Activated CD8-positive, alpha-beta T cell treated with anti-CD3 and anti-CD28 coated beads for 36 hours (primary cell): ENCODE measurements at regions of chr11 and their contacts with region 1.

Region 1: GRCh38 chr11:117200813-117201657 is 1.9 kb downstream of the TAGLN start:
- DNase-seq: no peak
- ATAC-seq: no peak
- H3K4me3 Mint-ChIP-seq: no peak overlapping the region
- H3K27ac Mint-ChIP-seq: no peak overlapping the region
- H3K4me1 Mint-ChIP-seq: no peaks in the 10 kb centered on the region
- H3K27me3 Mint-ChIP-seq: no peaks in the 10 kb centered on the region
- CTCF ChIP-seq: no peak

Region 2: GRCh38 chr11:117134431-117134830 is 66.6 kb before region 1 on chr11:
- CTCF ChIA-PET with region 1: no interaction called
- POLR2A ChIA-PET with region 1: no interaction called
- intact Hi-C with region 1: loop called (anchors 5 kb)
- DNase-seq: no peak
- ATAC-seq: no peak
- H3K4me3 Mint-ChIP-seq: no peak overlapping the region
- H3K27ac Mint-ChIP-seq: no peak overlapping the region
- H3K4me1 Mint-ChIP-seq: peaks cover 3% of the 10 kb centered on the region
- H3K27me3 Mint-ChIP-seq: no peaks in the 10 kb centered on the region
- CTCF ChIP-seq: no peak

Region 3: DNA sequence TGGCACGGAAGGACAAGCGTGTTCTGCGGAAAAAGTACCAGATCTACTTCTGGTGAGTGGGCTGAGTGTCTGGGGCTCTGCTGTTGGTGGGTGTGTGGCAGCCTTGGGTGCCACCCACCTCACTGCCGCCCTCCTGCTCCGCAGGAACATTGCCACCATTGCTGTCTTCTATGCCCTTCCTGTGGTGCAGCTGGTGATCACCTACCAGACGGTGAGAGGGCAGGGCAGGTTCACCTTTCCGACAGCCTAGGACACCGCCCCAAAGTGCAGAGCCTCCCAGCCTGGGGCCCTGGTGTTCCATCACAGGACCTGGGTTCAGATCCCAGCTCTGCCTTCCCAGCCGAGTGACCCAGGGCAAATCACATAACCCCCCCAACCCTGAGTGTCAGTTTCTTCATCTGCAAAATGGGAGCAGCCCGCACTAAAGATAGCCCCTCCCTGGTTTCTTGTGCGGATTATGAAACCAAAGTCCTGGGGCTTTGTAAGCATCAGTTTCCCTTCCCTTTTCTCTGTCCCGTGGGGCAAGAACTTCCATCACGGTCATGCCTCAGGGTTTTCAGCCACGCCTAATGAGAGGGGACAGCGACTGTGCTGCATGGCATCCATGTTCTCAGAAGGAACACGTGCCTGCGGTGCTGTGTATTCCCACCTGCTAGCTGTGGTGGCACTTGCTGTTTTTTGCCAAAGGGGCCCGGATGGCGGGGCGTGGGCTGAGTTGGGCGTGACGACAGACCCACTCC is 11.7 kb before region 1 on chr11:
- CTCF ChIA-PET with region 1: no interaction called
- POLR2A ChIA-PET with region 1: no interaction called
- intact Hi-C with region 1: no loop called
- DNase-seq: no peak
- ATAC-seq: no peak
- H3K4me3 Mint-ChIP-seq: no peak overlapping the region
- H3K27ac Mint-ChIP-seq: no peak overlapping the region
- H3K4me1 Mint-ChIP-seq: no peaks in the 10 kb centered on the region
- H3K27me3 Mint-ChIP-seq: no peaks in the 10 kb centered on the region
- CTCF ChIP-seq: no peak

Region 4: DNA sequence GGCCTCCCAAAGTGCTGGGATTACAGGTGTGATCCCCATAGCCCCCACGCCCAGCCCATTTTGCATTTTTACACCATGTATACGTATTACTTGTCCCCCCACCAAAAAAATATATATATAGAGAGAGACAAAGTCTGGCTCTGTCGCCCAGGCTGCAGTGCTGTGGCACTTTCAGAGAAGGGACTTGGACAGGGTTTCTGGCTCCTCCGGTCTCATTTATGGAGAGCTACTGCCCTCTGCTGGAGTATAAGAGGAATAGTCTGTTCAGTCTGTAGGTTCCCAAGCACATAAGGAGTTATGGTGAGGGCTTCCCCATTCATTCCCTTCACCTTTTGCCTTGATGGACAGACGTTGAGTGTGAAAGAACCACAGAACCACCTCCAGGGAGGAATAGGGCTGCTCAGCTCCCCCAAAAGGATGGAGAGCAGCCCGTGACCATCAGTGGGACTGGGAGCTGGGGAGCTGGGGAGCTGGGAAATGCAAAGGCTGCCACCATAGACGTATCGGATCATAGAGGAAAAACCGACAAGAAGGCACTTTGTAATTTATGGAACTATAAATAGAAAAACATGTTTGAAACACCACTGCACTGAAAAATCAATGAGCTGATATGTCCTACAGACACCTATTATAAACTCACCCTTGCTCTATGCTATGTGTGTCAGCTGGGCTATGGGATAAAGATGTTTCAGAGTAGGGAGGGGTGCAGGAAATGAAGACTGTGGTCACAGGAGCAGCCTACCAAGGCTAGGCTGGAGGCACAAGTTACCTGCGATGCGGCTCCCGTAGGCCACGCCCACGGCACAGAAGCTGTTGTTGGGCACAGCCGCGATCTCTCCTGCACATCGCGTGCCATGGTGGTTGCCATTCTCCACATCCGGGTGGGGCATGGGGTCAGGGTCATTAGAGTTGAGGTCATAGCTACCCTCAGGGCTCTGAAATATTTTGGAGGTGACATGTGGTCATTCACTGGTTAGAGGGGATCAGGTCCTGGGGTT is 25.7 kb after region 1 on chr11:
- CTCF ChIA-PET with region 1: interaction called, 6 read pairs
- POLR2A ChIA-PET with region 1: interaction called, 21 read pairs
- intact Hi-C with region 1: no loop called
- DNase-seq: peak; percentile 51
- ATAC-seq: peak; percentile 48
- H3K4me3 Mint-ChIP-seq: no peak overlapping the region
- H3K27ac Mint-ChIP-seq: peak overlapping the region; percentile 20
- H3K4me1 Mint-ChIP-seq: peaks cover 29% of the 10 kb centered on the region
- H3K27me3 Mint-ChIP-seq: no peaks in the 10 kb centered on the region
- CTCF ChIP-seq: peak; percentile 86

Region 5: DNA sequence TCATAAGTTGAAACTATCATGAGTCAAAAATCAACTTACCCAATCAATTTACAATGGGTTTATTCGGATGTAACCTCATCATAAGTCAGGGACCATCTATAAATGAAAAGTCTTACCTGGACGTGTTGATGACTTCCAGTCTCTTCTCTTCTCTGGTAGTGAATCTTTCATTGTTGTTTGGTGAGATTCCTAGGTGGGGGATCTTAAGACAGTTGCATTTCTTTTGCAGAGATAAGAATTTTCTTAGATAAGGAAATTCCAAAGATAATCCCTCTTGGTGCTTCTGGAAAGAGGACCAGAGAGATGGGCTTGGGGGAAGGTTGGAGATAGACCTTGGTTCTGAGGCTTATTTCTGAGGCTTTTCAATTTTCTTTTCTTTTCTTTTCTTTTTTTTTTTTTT is 68.8 kb after region 1 on chr11:
- CTCF ChIA-PET with region 1: no interaction called
- POLR2A ChIA-PET with region 1: no interaction called
- intact Hi-C with region 1: no loop called
- DNase-seq: no peak
- ATAC-seq: no peak
- H3K4me3 Mint-ChIP-seq: no peak overlapping the region
- H3K27ac Mint-ChIP-seq: no peak overlapping the region
- H3K4me1 Mint-ChIP-seq: no peaks in the 10 kb centered on the region
- H3K27me3 Mint-ChIP-seq: no peaks in the 10 kb centered on the region
- CTCF ChIP-seq: no peak

Region 6: GRCh38 chr11:117443266-117444195 is 242.5 kb after region 1 on chr11:
- CTCF ChIA-PET with region 1: no interaction called
- POLR2A ChIA-PET with region 1: no interaction called
- intact Hi-C with region 1: no loop called
- DNase-seq: peak; percentile 25
- ATAC-seq: peak; percentile 42
- H3K4me3 Mint-ChIP-seq: no peak overlapping the region
- H3K27ac Mint-ChIP-seq: no peak overlapping the region
- H3K4me1 Mint-ChIP-seq: no peaks in the 10 kb centered on the region
- H3K27me3 Mint-ChIP-seq: peaks cover 5% of the 10 kb centered on the region
- CTCF ChIP-seq: peak; percentile 29